ENCODE measurements at regions of chr9 and their contacts with region 1.

Region 1: GRCh38 chr9:32579706-32580331 is 6.9 kb upstream of the NDUFB6 start:
- DNase-seq: peak; percentile 50
- CTCF ChIP-seq: peak; percentile 94

Region 2: GRCh38 chr9:32384364-32385151 is 195.3 kb before region 1 on chr9 and contains the start of gene ACO1:
- CTCF ChIA-PET with region 1: interaction called, 872 read pairs
- POLR2A ChIA-PET with region 1: no interaction called
- DNase-seq: peak; percentile 97
- CTCF ChIP-seq: peak; percentile 28

Region 3: GRCh38 chr9:32526041-32526706 is 53.6 kb before region 1 on chr9 and contains the start of gene RIGI:
- CTCF ChIA-PET with region 1: interaction called, 13 read pairs
- POLR2A ChIA-PET with region 1: no interaction called
- DNase-seq: peak; percentile 58
- CTCF ChIP-seq: peak; percentile 12

Region 4: GRCh38 chr9:32543047-32543446 is 36.8 kb before region 1 on chr9:
- CTCF ChIA-PET with region 1: interaction called, 22 read pairs
- POLR2A ChIA-PET with region 1: no interaction called
- DNase-seq: no peak
- CTCF ChIP-seq: no peak

Region 5: GRCh38 chr9:32550562-32551433 is 29.0 kb before region 1 on chr9:
- CTCF ChIA-PET with region 1: interaction called, 32 read pairs
- POLR2A ChIA-PET with region 1: no interaction called
- DNase-seq: peak; percentile 98
- CTCF ChIP-seq: no peak

Region 6: DNA sequence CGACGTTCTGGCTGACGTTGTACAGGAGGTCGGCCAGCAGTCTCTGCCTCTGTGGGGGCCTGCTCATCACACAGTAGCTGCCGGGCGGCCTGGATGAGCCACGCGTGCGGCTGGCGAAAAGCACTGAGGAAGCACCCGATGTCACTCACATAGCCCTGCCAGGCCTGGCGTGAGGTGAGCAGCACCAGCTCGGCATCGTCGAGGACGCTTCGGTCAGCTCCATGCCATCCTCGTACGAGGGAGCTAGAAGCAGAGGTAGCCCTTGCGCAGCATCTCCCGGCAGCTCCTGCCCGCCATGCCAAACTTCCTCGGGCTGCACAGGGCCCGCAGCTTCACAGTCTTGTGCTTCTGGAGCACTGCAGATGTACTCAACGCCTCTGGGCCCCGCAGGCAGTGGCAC is 13.0 kb before region 1 on chr9:
- CTCF ChIA-PET with region 1: interaction called, 31 read pairs
- POLR2A ChIA-PET with region 1: no interaction called
- DNase-seq: no peak
- CTCF ChIP-seq: no peak

Region 7: DNA sequence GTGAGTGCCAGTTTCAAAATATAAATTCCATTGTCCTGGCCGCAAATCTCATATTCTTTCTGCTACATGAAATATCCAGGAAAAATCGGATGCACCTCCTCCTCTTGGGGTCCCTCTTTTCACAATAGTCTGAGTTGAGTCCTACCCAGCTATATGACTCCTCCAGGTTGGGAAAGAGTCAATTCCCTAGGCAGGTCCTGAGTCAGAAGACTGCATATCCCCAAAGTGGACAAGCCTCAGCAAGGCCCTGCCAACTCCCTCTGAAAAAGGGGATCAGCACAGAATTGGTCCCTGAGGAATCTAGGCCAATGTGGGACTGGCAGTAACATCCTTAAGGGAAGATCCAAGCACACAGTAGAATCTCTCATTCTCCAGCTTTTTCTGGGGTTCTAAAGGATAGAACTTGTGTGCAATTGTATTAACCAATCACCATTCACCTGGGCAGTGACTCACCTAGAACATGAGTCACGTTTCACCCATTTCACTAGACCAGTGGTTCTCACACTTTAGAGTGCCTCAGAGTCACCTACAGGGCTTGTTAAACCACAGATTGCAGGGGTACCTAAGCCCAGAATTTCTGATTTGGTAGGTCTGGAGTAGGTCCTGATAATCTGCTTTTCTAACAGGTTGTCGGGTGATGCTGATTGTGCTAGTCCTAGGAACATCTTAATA is 158.8 kb after region 1 on chr9:
- CTCF ChIA-PET with region 1: no interaction called
- POLR2A ChIA-PET with region 1: no interaction called
- DNase-seq: no peak
- CTCF ChIP-seq: no peak

Region 8: GRCh38 chr9:32801530-32801929 is 221.7 kb after region 1 on chr9:
- CTCF ChIA-PET with region 1: no interaction called
- POLR2A ChIA-PET with region 1: no interaction called
- DNase-seq: no peak
- CTCF ChIP-seq: no peak

Region 9: DNA sequence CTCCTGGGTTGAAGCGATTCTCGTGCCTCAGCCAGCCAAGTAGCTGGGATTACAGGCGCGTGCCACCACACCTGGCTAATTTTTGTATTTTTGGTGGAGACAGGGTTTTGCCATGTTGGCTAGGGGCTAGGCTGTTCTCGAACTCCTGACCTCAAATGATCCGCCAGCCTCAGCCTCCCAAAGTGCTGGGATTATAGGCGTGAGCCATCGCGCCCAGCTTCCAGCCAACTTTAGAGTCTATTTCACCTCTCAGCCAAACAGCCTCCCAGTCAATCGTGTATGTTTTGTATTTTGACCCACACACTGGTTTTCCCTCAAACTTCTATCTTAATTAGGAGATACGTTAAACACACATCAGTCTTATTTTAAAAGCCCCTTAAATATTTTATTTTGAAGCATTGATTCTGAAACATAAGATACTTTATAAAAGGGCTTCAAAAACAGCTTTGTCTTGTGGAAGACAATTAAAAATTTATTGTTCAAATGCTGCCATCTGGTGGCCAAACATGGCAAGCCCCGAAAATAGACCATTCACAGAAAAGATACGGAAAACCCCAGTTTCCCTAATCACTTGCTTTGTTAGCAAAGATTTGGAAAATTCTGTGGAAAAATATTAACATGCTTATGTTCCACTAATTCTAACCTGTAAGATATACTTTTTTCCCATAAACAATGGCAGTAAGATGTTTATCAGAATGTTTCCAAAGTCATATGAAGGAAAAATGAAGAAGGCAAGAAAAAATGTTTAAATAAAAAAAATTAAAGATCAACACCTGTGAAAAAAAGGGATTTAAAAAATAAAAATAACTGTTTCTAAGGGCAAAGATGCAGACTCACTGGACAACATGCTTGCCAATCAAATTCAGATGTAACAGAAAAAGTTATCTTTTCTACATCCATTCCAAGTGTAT is 388.5 kb after region 1 on chr9:
- CTCF ChIA-PET with region 1: interaction called, 168 read pairs
- POLR2A ChIA-PET with region 1: no interaction called
- DNase-seq: peak; percentile 56
- CTCF ChIP-seq: peak; percentile 68

Measured in GM10248 (cell line).